ENCODE measurements at regions of chr12 and their contacts with region 1.

Region 1: GRCh38 chr12:83904175-83904574 is 1008.4 kb downstream of the SLC6A15 start:
- DNase-seq: no peak
- H3K4me3 ChIP-seq: no peak overlapping the region
- H3K27ac ChIP-seq: no peak overlapping the region
- H3K4me1 ChIP-seq: no peaks in the 10 kb centered on the region
- H3K27me3 ChIP-seq: no peaks in the 10 kb centered on the region
- CTCF ChIP-seq: no peak
- POLR2A ChIP-seq: no peak

Region 2: DNA sequence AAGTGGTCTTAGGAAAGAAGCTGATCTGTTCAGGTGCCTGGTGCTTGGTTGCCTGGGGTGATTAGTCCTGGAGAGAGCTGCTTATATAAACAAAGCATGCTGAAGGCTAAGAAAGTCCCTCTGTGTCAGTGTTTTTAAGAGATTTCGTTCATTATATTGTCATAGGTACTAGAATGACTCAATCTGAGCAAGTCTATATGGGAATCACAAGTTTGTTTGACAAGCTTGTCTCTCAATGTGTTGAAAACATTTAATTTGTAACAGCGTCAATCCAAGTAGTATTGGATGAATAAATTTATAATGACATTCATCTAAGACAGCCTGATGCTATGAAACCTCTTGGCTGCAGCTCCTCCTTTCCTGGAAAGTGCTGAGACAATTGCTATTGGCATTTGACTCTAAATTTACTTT is 961.2 kb before region 1 on chr12:
- intact Hi-C with region 1: loop called (anchors 5 kb)
- DNase-seq: no peak
- H3K4me3 ChIP-seq: no peak overlapping the region
- H3K27ac ChIP-seq: no peak overlapping the region
- H3K4me1 ChIP-seq: no peaks in the 10 kb centered on the region
- H3K27me3 ChIP-seq: no peaks in the 10 kb centered on the region
- CTCF ChIP-seq: no peak
- POLR2A ChIP-seq: no peak

Region 3: DNA sequence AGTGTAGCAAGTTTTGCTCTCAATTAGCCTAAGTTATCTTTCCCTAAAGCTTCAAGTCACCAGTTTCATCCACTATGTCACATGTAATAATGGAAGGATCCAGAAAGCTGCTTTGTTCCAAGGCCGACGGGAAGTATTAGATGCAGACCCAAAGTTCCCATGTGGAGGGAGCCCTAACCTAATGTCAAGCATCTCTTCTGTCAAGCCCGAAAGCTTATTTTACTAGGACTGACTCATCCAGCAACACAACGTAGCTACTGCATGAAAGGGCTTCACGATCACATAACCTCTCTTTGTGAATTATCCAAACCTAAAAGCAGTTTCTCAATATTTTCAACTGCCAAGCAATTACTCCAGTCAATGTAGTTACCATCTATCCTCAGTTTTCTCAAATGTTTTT is 875.0 kb after region 1 on chr12:
- intact Hi-C with region 1: no loop called
- DNase-seq: no peak
- H3K4me3 ChIP-seq: no peak overlapping the region
- H3K27ac ChIP-seq: no peak overlapping the region
- H3K4me1 ChIP-seq: no peaks in the 10 kb centered on the region
- H3K27me3 ChIP-seq: no peaks in the 10 kb centered on the region
- CTCF ChIP-seq: no peak
- POLR2A ChIP-seq: no peak

Measured in breast epithelium (tissue), 4 donors.